Naive thymus-derived CD4-positive, alpha-beta T cell (primary cell): ENCODE measurements at regions of chr11 and their contacts with region 1.

Region 1: DNA sequence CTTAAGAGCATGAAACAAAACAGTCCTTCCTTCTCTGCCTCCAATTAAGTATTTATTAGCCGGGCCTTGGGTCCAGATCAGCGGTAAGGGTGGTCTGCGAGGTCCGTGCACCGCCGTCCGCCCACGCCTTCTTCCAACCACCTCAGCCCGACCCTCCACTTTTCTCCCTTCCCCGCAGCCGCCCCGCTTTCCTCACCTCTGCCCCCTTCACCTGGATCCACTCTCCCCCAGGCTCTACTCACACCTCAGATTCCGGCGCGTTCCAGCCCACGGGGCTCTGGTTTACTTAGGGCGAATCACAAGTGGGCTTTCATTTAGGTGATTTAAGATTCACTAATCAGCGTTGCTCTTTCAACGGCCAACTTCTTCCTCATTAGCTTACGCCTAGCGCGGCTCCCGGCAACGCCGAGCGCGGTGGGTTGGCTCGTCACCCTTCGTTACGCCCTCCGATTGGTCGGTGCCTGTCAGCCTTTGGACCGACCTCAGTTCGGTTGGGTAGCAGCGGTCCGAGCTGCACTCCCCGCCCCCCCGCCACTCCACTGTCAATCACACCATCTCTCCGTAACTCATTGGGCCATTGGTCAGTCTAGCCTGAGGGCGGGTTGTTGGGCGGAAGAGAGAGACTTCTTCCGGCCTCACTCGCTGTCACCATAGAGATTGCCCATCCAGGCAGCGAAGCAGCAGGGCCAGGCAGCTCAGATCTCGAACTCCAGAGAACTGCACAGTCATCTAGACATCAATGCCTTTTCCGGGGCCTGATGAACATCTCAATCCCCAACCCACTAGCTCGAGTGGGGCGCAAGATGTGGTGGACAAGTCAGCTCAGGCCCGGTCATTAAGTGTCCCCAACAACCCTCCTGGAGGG is at the start of gene TMEM218:
- DNase-seq: peak; percentile 81 to 97 (median 93)
- ATAC-seq: peak; percentile 97
- H3K4me3 ChIP-seq: peak within 1 kb of the TSS; percentile 81
- H3K4me3 Mint-ChIP-seq: peak within 1 kb of the TSS; percentile 91 to 100 (median 96)
- H3K27ac ChIP-seq: peak within 1 kb of the TSS; percentile 77
- H3K27ac Mint-ChIP-seq: peak within 1 kb of the TSS; percentile 91 to 97 (median 94)
- H3K4me1 ChIP-seq: peaks cover 0 to 8% of the 10 kb centered on the region in 2 donors
- H3K4me1 Mint-ChIP-seq: peaks cover 0 to 33% (median 22%) of the 10 kb centered on the region in 7 donors
- H3K27me3 ChIP-seq: no peaks in the 10 kb centered on the region
- H3K27me3 Mint-ChIP-seq: peaks cover 0 to 2% (median 0%) of the 10 kb centered on the region in 5 donors
- total RNA-seq, gene TMEM218: 10.2 to 18.5 (median 13.9) TPM

Region 2: DNA sequence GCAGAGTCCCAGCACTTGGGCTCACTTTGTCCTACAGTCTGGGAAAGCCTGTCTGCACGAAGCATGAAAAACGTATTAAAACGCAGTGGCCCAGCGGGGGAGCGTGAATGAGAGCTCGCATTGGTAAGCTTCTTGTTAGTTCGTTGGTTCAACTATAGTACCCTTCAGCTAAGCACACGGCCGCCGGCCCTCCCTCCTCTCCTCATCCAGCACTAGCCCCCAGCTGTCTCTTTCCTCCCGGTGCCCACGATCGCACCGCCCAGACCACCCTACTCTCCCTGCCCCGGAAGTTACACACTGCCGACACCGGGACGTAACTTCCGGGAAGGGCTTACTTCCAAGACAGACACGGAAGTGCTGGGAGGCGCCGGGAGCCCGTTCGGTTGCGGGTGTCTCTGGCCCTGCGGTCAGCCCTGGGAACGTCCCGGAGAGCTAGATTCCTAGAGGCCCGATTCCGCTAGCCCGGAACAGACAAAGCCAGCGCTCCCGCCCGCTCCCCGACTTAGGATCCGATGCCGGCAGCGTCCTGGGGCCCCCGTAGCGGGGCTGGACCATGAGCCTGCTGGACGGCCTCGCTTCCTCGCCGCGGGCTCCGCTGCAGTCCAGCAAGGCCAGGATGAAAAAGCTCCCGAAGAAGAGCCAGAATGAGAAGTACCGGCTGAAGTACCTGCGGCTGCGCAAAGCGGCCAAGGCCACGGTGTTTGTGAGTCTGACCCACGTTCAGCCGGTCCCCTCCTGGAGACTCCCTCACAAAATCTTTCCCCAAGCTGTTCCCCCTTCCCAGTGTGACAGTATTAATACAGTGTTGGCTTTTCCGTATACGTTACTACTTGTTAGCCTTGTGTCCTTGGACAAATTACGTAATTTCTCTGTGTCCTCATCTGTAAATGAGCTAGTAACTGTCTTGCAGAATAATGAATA is 488.8 kb before region 1 on chr11 and contains the start of gene TBRG1:
- CTCF ChIA-PET with region 1: no interaction called
- POLR2A ChIA-PET with region 1: interaction called, 4 read pairs
- intact Hi-C with region 1: loop called (anchors 1 to 5 kb)
- DNase-seq: peak; percentile 58 to 87 (median 81)
- ATAC-seq: peak; percentile 96
- H3K4me3 ChIP-seq: peak within 1 kb of the TSS; percentile 75
- H3K4me3 Mint-ChIP-seq: peak within 1 kb of the TSS; percentile 89 to 100 (median 98)
- H3K27ac ChIP-seq: peak within 1 kb of the TSS; percentile 91
- H3K27ac Mint-ChIP-seq: peak within 1 kb of the TSS; percentile 91 to 100 (median 98)
- H3K4me1 ChIP-seq: peaks cover 7 to 12% of the 10 kb centered on the region in 2 donors
- H3K4me1 Mint-ChIP-seq: peaks cover 21 to 52% (median 46%) of the 10 kb centered on the region in 7 donors
- H3K27me3 ChIP-seq: no peaks in the 10 kb centered on the region
- H3K27me3 Mint-ChIP-seq: peaks cover 0 to 23% (median 7%) of the 10 kb centered on the region in 5 donors
- total RNA-seq, gene TBRG1: 35.5 to 78.6 (median 63.9) TPM

Region 3: GRCh38 chr11:124800226-124800929 is 311.2 kb before region 1 on chr11 and contains the start of gene MSANTD2:
- CTCF ChIA-PET with region 1: no interaction called
- POLR2A ChIA-PET with region 1: no interaction called
- intact Hi-C with region 1: loop called in 1 of 2 experiments (anchors 1 kb)
- DNase-seq: peak; percentile 65 to 89 (median 73)
- ATAC-seq: peak; percentile 92
- H3K4me3 ChIP-seq: peak within 1 kb of the TSS; percentile 71
- H3K4me3 Mint-ChIP-seq: peak within 1 kb of the TSS; percentile 88 to 97 (median 96)
- H3K27ac ChIP-seq: peak within 1 kb of the TSS; percentile 93
- H3K27ac Mint-ChIP-seq: peak within 1 kb of the TSS; percentile 88 to 98 (median 94)
- H3K4me1 ChIP-seq: peaks cover 8 to 14% of the 10 kb centered on the region in 2 donors
- H3K4me1 Mint-ChIP-seq: peaks cover 13 to 38% (median 32%) of the 10 kb centered on the region in 7 donors
- H3K27me3 ChIP-seq: no peaks in the 10 kb centered on the region
- H3K27me3 Mint-ChIP-seq: peaks cover 0 to 24% (median 0%) of the 10 kb centered on the region in 5 donors
- total RNA-seq, gene MSANTD2: 9.1 to 29.5 (median 14.4) TPM

Region 4: DNA sequence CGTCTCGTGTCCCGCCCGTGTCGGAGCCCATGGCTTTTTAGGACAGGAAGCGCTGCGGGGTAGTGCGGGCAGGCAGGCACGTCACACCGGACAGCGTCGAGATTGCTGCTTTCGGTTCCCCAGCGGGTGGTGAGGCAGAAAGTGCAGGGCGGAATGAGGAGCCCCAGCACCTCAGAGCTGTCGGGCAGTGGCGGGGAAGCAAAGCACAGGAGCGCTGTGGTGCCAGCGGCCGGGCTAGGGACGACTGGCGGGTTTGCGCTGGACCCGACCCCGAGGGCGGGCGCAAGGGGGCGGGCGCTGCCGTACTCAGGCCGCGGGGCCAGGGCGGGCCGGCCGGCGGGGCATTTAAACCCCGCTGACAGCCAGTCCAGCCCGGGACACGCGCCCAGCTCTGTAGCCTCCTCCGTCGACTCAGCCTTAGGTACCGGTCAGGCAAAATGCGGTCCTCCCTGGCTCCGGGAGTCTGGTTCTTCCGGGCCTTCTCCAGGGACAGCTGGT is 48.6 kb before region 1 on chr11 and contains the start of gene SLC37A2:
- CTCF ChIA-PET with region 1: no interaction called
- POLR2A ChIA-PET with region 1: no interaction called
- intact Hi-C with region 1: loop called (anchors 1 to 5 kb)
- DNase-seq: peak in 6 of 9 donors; percentile 10 to 55 (median 19)
- ATAC-seq: peak; percentile 91
- H3K4me3 ChIP-seq: peak within 1 kb of the TSS; percentile 58
- H3K4me3 Mint-ChIP-seq: peak within 1 kb of the TSS; percentile 78 to 90 (median 86)
- H3K27ac ChIP-seq: no peak within 1 kb of the TSS
- H3K27ac Mint-ChIP-seq: peak within 1 kb of the TSS in 4 of 9 donors; percentile 3 to 62 (median 42)
- H3K4me1 ChIP-seq: peaks cover 4 to 7% of the 10 kb centered on the region in 2 donors
- H3K4me1 Mint-ChIP-seq: peaks cover 0 to 15% (median 10%) of the 10 kb centered on the region in 7 donors
- H3K27me3 ChIP-seq: peaks cover 0 to 10% of the 10 kb centered on the region in 2 donors
- H3K27me3 Mint-ChIP-seq: peaks cover 40 to 64% (median 44%) of the 10 kb centered on the region in 5 donors
- total RNA-seq, gene SLC37A2: 0.58 to 16.3 (median 4.0) TPM

Region 5: DNA sequence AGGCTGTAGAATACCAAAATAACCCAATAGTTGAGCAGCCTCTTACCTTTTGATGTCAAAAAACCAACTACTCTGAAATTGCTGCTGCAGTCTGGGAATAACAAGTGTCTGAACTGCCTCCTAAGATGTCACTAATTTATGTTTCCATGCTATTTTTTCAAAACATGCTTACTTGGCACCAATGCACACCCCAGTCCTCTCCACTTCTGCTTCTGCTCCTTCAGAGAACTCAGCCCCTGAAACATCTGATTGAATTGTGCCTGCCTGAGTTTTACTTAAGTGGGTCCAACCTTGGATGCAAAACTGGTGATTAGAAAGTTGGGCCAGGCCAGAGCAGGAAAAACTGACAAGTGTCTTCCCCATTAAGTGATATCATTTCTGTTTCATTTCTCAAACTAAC is 24.4 kb after region 1 on chr11:
- CTCF ChIA-PET with region 1: no interaction called
- POLR2A ChIA-PET with region 1: no interaction called
- intact Hi-C with region 1: no loop called
- DNase-seq: no peak
- ATAC-seq: no peak
- H3K4me3 ChIP-seq: no peak overlapping the region
- H3K4me3 Mint-ChIP-seq: no peak overlapping the region
- H3K27ac ChIP-seq: no peak overlapping the region
- H3K27ac Mint-ChIP-seq: no peak overlapping the region
- H3K4me1 ChIP-seq: no peaks in the 10 kb centered on the region
- H3K4me1 Mint-ChIP-seq: no peaks in the 10 kb centered on the region
- H3K27me3 ChIP-seq: peaks cover 0 to under 1% of the 10 kb centered on the region in 2 donors
- H3K27me3 Mint-ChIP-seq: peaks cover 31 to 54% (median 43%) of the 10 kb centered on the region in 5 donors

Region 6: DNA sequence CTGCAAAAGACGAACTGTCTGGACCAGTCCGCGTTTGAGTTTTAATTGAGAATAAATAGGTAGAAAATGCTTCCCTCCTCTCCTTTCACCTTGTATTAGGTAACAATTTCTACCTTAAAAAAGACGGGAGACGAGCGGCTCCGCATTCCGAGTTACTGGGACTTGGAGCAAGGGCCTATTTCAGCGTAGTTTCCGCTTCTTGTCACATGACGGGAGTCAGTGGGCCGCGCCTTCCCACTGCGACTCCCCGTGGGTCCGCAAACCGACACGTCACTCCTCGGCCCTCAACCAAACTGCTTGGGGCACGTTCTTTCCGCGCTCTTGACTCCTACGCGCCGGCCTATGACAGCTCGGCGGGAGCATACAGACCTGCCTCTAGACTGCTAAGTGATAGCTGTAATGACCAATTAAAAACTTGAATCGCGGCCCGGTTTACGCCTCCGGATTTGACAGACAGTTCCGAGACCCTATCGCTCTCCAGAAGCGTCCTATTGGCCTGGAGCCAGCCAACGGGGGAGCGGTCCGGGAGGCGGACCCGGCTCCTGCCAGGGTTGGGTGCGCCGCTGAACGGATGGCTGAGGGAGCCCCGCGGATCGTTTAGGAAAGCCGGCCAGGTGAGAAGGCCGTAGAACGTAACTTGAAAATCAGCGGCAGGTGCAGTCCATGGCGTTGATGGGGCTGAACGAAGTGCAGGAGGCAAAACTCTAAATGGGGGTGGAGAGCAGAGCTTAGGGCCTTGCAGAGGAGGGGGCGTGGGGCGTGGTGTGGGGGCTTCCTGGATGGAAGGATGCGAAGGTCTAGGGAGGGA is 480.9 kb after region 1 on chr11 and contains the start of gene STT3A:
- CTCF ChIA-PET with region 1: no interaction called
- POLR2A ChIA-PET with region 1: no interaction called
- intact Hi-C with region 1: loop called in 1 of 2 experiments (anchors 1 kb)
- DNase-seq: peak; percentile 94 to 99 (median 99)
- ATAC-seq: peak; percentile 96
- H3K4me3 ChIP-seq: peak within 1 kb of the TSS; percentile 94
- H3K4me3 Mint-ChIP-seq: peak within 1 kb of the TSS; percentile 88 to 99 (median 96)
- H3K27ac ChIP-seq: peak within 1 kb of the TSS; percentile 95
- H3K27ac Mint-ChIP-seq: peak within 1 kb of the TSS; percentile 94 to 100 (median 99)
- H3K4me1 ChIP-seq: peaks cover 13% of the 10 kb centered on the region in 2 donors
- H3K4me1 Mint-ChIP-seq: peaks cover 30 to 62% (median 53%) of the 10 kb centered on the region in 7 donors
- H3K27me3 ChIP-seq: no peaks in the 10 kb centered on the region
- H3K27me3 Mint-ChIP-seq: no peaks in the 10 kb centered on the region
- total RNA-seq, gene STT3A: 39.6 to 153 (median 84.5) TPM

Region 7: GRCh38 chr11:125618383-125618782 is 506.8 kb after region 1 on chr11:
- CTCF ChIA-PET with region 1: no interaction called
- POLR2A ChIA-PET with region 1: no interaction called
- intact Hi-C with region 1: no loop called
- DNase-seq: no peak
- ATAC-seq: no peak
- H3K4me3 ChIP-seq: no peak overlapping the region
- H3K4me3 Mint-ChIP-seq: no peak overlapping the region
- H3K27ac ChIP-seq: no peak overlapping the region
- H3K27ac Mint-ChIP-seq: no peak overlapping the region
- H3K4me1 ChIP-seq: no peaks in the 10 kb centered on the region
- H3K4me1 Mint-ChIP-seq: peaks cover 0 to 2% (median 0%) of the 10 kb centered on the region in 7 donors
- H3K27me3 ChIP-seq: no peaks in the 10 kb centered on the region
- H3K27me3 Mint-ChIP-seq: no peaks in the 10 kb centered on the region

Region 8: GRCh38 chr11:126268708-126269579 is 1157.4 kb after region 1 on chr11 and contains the starts of genes FOXRED1 and SRPRA:
- CTCF ChIA-PET with region 1: no interaction called
- POLR2A ChIA-PET with region 1: no interaction called
- intact Hi-C with region 1: loop called in 1 of 2 experiments (anchors 2 kb)
- DNase-seq: peak; percentile 98 to 100 (median 100)
- ATAC-seq: peak; percentile 100
- H3K4me3 ChIP-seq: peak within 1 kb of the TSS; percentile 99
- H3K4me3 Mint-ChIP-seq: peak within 1 kb of the TSS; percentile 91 to 98 (median 97)
- H3K27ac ChIP-seq: peak within 1 kb of the TSS; percentile 94
- H3K27ac Mint-ChIP-seq: peak within 1 kb of the TSS; percentile 94 to 99 (median 98)
- H3K4me1 ChIP-seq: peaks cover 22 to 23% of the 10 kb centered on the region in 2 donors
- H3K4me1 Mint-ChIP-seq: peaks cover 26 to 60% (median 47%) of the 10 kb centered on the region in 7 donors
- H3K27me3 ChIP-seq: no peaks in the 10 kb centered on the region
- H3K27me3 Mint-ChIP-seq: no peaks in the 10 kb centered on the region
- total RNA-seq, gene FOXRED1: 27.5 to 42.7 (median 35.5) TPM
- total RNA-seq, gene SRPRA: 141 to 179 (median 150) TPM